Panc1 (cell line): ENCODE measurements at regions of chr12 and their contacts with region 1.

Region 1: DNA sequence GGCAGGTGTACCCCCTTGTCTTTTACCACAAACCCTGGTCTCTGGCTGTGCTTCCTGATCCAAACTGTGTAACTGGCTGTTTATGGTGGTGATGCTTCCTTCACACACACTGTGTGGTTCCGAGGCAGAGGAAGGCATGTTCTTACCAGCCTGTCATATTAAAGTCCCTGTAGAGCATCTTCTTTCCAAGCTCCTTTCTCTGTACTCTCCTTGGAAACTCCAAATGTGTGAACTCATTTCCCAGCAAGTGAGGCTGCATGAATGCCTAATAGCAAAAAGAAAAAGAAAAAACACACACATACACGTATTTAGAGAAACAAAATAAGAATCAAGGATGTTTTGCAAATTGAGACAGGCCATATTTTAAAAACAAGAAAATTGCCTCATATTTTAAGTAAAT is 214.9 kb downstream of the PPM1H start:
- DNase-seq: no peak
- ATAC-seq: no peak
- H3K4me3 ChIP-seq: no peak overlapping the region
- H3K27ac ChIP-seq: peak overlapping the region; percentile 95
- H3K4me1 ChIP-seq: peaks cover 65% of the 10 kb centered on the region
- H3K27me3 ChIP-seq: no peaks in the 10 kb centered on the region
- CTCF ChIP-seq: no peak

Region 2: DNA sequence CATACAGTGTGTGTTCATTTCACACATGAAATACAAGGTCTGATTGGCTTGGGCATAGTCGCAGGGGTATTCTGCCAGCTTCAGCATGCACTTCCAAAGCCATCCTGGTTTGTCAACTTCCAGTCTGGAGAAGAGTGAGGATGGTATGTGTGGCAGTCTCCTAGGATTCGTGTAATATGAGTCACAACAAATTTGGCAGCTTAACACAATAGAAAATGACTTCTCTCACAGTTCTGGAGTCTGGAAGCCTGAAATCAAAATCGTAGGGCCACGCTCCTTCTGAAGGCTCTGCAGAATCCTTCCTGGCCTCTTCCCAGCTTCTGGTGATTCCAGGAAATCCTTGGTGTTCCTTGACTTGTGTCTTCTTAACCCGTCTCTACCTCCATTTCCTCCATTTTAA is 47.5 kb after region 1 on chr12:
- CTCF ChIA-PET with region 1: no interaction called
- POLR2A ChIA-PET with region 1: no interaction called
- in situ Hi-C with region 1: no loop called
- intact Hi-C with region 1: no loop called
- DNase-seq: no peak
- ATAC-seq: 0 out of 2 replicates have a peak, but pooled peaks have one; percentile 45
- H3K4me3 ChIP-seq: no peak overlapping the region
- H3K27ac ChIP-seq: no peak overlapping the region; the same call in 1 of the 2 replicates
- H3K4me1 ChIP-seq: no peaks in the 10 kb centered on the region
- H3K27me3 ChIP-seq: no peaks in the 10 kb centered on the region
- CTCF ChIP-seq: no peak

Region 3: DNA sequence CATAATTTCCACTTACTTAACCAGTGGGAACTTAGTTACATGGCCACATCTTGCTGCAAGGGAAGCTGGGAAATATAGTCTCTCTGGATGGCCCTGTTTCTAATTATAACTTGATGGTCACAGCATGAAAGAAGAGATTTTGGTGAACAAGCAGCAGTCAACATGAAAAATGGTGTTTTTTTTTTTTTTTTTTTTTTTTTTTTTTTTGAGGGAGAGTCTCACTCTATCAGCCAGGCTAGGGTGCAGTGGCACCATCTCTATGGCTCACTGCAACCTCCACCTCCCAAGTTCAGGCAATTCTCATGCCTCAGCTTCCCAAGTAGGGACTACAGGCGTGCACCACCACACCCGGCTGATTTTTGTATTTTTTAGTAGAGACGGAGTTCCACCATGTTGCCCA is 1135.3 kb after region 1 on chr12:
- CTCF ChIA-PET with region 1: no interaction called
- POLR2A ChIA-PET with region 1: interaction called, 12 read pairs
- in situ Hi-C with region 1: no loop called
- intact Hi-C with region 1: no loop called
- DNase-seq: no peak
- ATAC-seq: no peak
- H3K4me3 ChIP-seq: no peak overlapping the region
- H3K27ac ChIP-seq: peak overlapping the region; percentile 50
- H3K4me1 ChIP-seq: peaks cover 39% of the 10 kb centered on the region
- H3K27me3 ChIP-seq: no peaks in the 10 kb centered on the region
- CTCF ChIP-seq: no peak